B cell (primary cell): ENCODE measurements at regions of chr13 and their contacts with region 1.

Region 1: DNA sequence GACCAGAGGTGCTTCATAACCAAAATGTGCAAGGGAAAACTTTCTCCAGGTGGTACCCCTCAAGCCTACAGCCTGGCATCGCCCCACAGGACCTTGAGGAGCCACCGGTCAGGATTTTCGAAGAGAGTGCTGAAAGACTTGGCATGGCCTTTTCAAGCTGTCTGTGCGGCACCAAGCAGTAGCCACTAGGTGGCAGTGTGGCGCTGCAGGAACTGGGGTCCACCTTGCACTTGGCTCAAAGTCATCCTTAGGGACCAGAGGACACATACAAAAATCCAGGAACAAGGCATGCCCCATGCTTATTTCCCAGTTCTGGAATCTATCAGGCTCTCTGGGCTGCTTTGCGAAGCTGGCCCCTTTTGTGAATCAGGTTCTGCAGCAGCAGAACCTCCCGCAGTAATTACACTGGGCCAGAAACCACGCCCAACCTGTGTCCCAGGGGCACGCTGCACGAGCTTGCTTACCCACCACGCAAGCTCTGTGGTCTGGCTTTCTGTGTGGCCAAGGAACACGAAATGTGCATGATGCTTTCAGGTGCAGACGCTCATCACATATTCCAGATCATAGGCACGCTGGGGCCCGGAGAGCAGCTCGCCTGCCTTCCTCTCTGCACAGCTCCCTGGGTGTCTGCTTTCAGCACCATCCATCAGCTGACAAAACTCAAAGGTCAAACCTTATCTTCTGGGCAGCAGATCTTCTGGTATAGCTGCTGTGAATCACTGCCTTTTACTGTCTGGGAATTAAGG is 87.2 kb downstream of the SLC7A1 start:
- DNase-seq: peak; percentile 77
- ATAC-seq: peak; percentile 82
- H3K4me3 ChIP-seq: no peak overlapping the region
- H3K4me3 Mint-ChIP-seq: no peak overlapping the region
- H3K27ac ChIP-seq: no peak overlapping the region
- H3K27ac Mint-ChIP-seq: no peak overlapping the region
- H3K4me1 ChIP-seq: peaks cover 0 to under 1% of the 10 kb centered on the region in 2 donors
- H3K4me1 Mint-ChIP-seq: peaks cover 6% of the 10 kb centered on the region
- H3K27me3 ChIP-seq: peaks cover 0 to 19% (median 6%) of the 10 kb centered on the region in 4 experiments
- H3K27me3 Mint-ChIP-seq: peaks cover 18% of the 10 kb centered on the region
- CTCF ChIP-seq: peak; percentile 98

Region 2: DNA sequence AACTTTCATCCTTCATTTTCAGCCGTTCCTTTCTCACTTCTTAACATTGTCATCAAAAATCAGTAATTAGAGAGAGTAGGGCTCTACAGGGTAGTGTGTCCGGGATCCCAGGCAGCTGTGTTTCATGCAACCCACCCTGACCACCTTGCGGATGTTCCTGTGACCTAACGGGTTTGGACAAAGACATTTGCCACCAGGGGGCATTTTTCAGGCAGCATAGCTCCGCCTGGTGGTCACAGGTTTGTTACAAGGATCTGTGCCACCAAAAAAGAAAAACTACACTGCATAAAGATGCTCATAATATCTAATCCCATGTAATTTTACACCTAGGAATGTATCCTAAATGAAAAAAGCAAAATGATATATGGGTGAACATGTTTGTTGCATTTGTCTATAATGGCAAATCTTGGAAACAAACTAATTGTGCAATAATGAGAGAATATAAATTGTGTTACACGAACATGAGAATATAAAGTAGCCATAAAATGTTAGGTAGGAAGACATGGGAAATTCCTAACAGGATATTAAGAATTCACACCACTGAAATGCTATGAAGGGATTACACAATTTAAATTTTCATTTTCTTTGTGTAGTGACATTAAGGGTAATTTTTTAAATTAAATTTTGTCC is 35.9 kb before region 1 on chr13:
- CTCF ChIA-PET with region 1: interaction called, 15 read pairs
- POLR2A ChIA-PET with region 1: no interaction called
- intact Hi-C with region 1: no loop called
- DNase-seq: peak; percentile 72
- ATAC-seq: peak; percentile 67
- H3K4me3 ChIP-seq: no peak overlapping the region
- H3K4me3 Mint-ChIP-seq: no peak overlapping the region
- H3K27ac ChIP-seq: no peak overlapping the region
- H3K27ac Mint-ChIP-seq: no peak overlapping the region
- H3K4me1 ChIP-seq: peaks cover 4 to 9% of the 10 kb centered on the region in 2 donors
- H3K4me1 Mint-ChIP-seq: peaks cover 2% of the 10 kb centered on the region
- H3K27me3 ChIP-seq: no peaks in the 10 kb centered on the region
- H3K27me3 Mint-ChIP-seq: peaks cover 4% of the 10 kb centered on the region
- CTCF ChIP-seq: peak; percentile 99

Region 3: DNA sequence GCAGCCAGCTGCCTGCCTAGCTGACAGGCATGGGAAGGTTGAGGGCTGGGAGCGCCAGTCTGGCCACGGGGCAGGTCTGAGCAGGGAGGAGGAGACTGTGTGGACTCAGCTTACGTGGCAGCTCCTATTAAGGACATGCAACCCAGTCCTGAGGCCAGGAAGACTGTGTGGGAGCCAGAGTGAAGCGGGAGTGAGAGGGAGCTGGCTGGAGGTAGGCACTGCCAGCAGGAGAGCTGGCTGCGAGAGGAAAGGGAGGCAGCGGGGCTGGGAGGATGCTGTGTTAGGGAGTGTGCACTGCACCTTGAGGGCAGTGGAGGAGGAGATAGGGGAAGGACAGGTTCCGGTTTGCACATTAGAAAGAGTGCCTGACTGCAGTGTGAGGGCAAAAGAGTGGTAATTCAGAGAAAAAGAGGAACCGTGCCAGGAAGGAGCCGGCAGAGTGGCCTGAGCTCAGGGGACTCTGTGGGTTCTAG is 12.0 kb before region 1 on chr13:
- CTCF ChIA-PET with region 1: interaction called, 53 read pairs
- POLR2A ChIA-PET with region 1: no interaction called
- intact Hi-C with region 1: no loop called
- DNase-seq: peak; percentile 78
- ATAC-seq: peak; percentile 68
- H3K4me3 ChIP-seq: peak overlapping the region in 4 of 5 experiments; percentile 14 to 48 (median 26)
- H3K4me3 Mint-ChIP-seq: peak overlapping the region; percentile 86
- H3K27ac ChIP-seq: peak overlapping the region; percentile 46 to 47
- H3K27ac Mint-ChIP-seq: peak overlapping the region; percentile 80
- H3K4me1 ChIP-seq: peaks cover 36 to 39% of the 10 kb centered on the region in 2 donors
- H3K4me1 Mint-ChIP-seq: peaks cover 36% of the 10 kb centered on the region
- H3K27me3 ChIP-seq: no peaks in the 10 kb centered on the region
- H3K27me3 Mint-ChIP-seq: no peaks in the 10 kb centered on the region
- CTCF ChIP-seq: no peak

Region 4: GRCh38 chr13:29713839-29714238 is 205.5 kb after region 1 on chr13:
- CTCF ChIA-PET with region 1: interaction called, 26 read pairs
- POLR2A ChIA-PET with region 1: no interaction called
- intact Hi-C with region 1: no loop called
- DNase-seq: no peak
- ATAC-seq: no peak
- H3K4me3 ChIP-seq: no peak overlapping the region
- H3K4me3 Mint-ChIP-seq: no peak overlapping the region
- H3K27ac ChIP-seq: no peak overlapping the region
- H3K27ac Mint-ChIP-seq: no peak overlapping the region
- H3K4me1 ChIP-seq: no peaks in the 10 kb centered on the region
- H3K4me1 Mint-ChIP-seq: no peaks in the 10 kb centered on the region
- H3K27me3 ChIP-seq: peaks cover 0 to 14% (median 0%) of the 10 kb centered on the region in 4 experiments
- H3K27me3 Mint-ChIP-seq: peaks cover 30% of the 10 kb centered on the region
- CTCF ChIP-seq: peak; percentile 58

Region 5: GRCh38 chr13:29749401-29750182 is 241.3 kb after region 1 on chr13:
- CTCF ChIA-PET with region 1: no interaction called
- POLR2A ChIA-PET with region 1: no interaction called
- intact Hi-C with region 1: no loop called
- DNase-seq: no peak
- ATAC-seq: no peak
- H3K4me3 ChIP-seq: no peak overlapping the region
- H3K4me3 Mint-ChIP-seq: no peak overlapping the region
- H3K27ac ChIP-seq: no peak overlapping the region
- H3K27ac Mint-ChIP-seq: no peak overlapping the region
- H3K4me1 ChIP-seq: peaks cover 0 to 4% of the 10 kb centered on the region in 2 donors
- H3K4me1 Mint-ChIP-seq: peaks cover 8% of the 10 kb centered on the region
- H3K27me3 ChIP-seq: peaks cover 0 to 2% (median 1%) of the 10 kb centered on the region in 4 experiments
- H3K27me3 Mint-ChIP-seq: peaks cover 19% of the 10 kb centered on the region
- CTCF ChIP-seq: no peak

Region 6: DNA sequence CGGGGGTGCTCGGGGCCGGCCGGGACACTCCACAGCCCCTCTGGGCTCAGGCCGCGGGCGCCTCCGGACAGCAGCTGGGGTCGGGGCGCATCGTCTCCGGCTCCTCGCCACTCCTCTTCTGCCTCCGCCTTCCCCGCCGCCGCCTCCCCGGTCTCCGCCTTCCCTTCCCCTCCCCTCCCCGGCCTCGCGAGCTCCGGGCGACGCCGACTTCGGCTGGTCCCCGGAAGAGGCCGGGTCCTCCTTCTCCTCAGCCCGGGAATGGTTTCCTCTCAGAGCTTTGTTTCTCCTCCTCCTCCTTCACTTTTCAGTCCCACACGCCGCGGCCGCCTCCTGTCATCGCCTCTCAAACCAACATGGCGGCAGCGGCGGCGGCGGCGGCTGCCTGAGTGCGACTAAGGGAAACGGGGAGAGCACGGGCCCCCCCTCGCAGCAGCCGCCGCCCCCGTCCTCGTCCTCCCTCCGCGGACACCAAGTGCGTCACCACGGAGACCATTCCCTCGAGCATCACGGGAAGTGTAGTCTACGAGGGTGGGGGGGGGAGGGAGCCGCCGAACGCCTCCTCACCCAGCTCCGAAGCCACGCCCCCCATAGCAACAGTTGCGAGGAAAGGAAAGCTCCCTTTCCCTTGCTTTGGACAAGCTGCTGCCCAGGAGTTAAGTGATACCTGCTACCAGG is 342.1 kb after region 1 on chr13 and contains the start of gene UBL3:
- CTCF ChIA-PET with region 1: interaction called, 5 read pairs
- POLR2A ChIA-PET with region 1: no interaction called
- intact Hi-C with region 1: loop called (anchors 10 kb)
- DNase-seq: peak; percentile 97
- ATAC-seq: peak; percentile 92
- H3K4me3 ChIP-seq: peak within 1 kb of the TSS; percentile 78 to 99 (median 87)
- H3K4me3 Mint-ChIP-seq: peak within 1 kb of the TSS; percentile 91
- H3K27ac ChIP-seq: peak within 1 kb of the TSS; percentile 93 to 94
- H3K27ac Mint-ChIP-seq: peak within 1 kb of the TSS; percentile 99
- H3K4me1 ChIP-seq: peaks cover 17 to 20% of the 10 kb centered on the region in 2 donors
- H3K4me1 Mint-ChIP-seq: peaks cover 28% of the 10 kb centered on the region
- H3K27me3 ChIP-seq: no peaks in the 10 kb centered on the region
- H3K27me3 Mint-ChIP-seq: no peaks in the 10 kb centered on the region
- CTCF ChIP-seq: no peak
- total RNA-seq, gene UBL3: 26.4 and 27.9 TPM in 2 replicates

Region 7: GRCh38 chr13:30114571-30115256 is 606.4 kb after region 1 on chr13:
- CTCF ChIA-PET with region 1: interaction called, 113 read pairs
- POLR2A ChIA-PET with region 1: no interaction called
- intact Hi-C with region 1: loop called (anchors 1 kb)
- DNase-seq: peak; percentile 92
- ATAC-seq: peak; percentile 93
- H3K4me3 ChIP-seq: peak overlapping the region; percentile 32 to 72 (median 47)
- H3K4me3 Mint-ChIP-seq: peak overlapping the region; percentile 84
- H3K27ac ChIP-seq: no peak overlapping the region
- H3K27ac Mint-ChIP-seq: peak overlapping the region; percentile 66
- H3K4me1 ChIP-seq: peaks cover 6 to 23% of the 10 kb centered on the region in 2 donors
- H3K4me1 Mint-ChIP-seq: peaks cover 28% of the 10 kb centered on the region
- H3K27me3 ChIP-seq: peaks cover 0 to 5% (median 2%) of the 10 kb centered on the region in 4 experiments
- H3K27me3 Mint-ChIP-seq: peaks cover 21% of the 10 kb centered on the region
- CTCF ChIP-seq: peak; percentile 89

Region 8: GRCh38 chr13:30504081-30504480 is 995.8 kb after region 1 on chr13:
- CTCF ChIA-PET with region 1: no interaction called
- POLR2A ChIA-PET with region 1: no interaction called
- intact Hi-C with region 1: no loop called
- DNase-seq: no peak
- ATAC-seq: no peak
- H3K4me3 ChIP-seq: no peak overlapping the region
- H3K4me3 Mint-ChIP-seq: no peak overlapping the region
- H3K27ac ChIP-seq: no peak overlapping the region
- H3K27ac Mint-ChIP-seq: no peak overlapping the region
- H3K4me1 ChIP-seq: no peaks in the 10 kb centered on the region
- H3K4me1 Mint-ChIP-seq: no peaks in the 10 kb centered on the region
- H3K27me3 ChIP-seq: no peaks in the 10 kb centered on the region
- H3K27me3 Mint-ChIP-seq: no peaks in the 10 kb centered on the region
- CTCF ChIP-seq: no peak